Spleen (tissue), 13 donors: ENCODE measurements at regions of chr17 and their contacts with region 1.

Region 1: GRCh38 chr17:51000835-51001638 is 119.6 kb downstream of the SPAG9 start:
- DNase-seq: no peak
- H3K4me3 ChIP-seq: no peak overlapping the region
- H3K27ac ChIP-seq: peak overlapping the region in 1 of 8 donors; percentile 16
- H3K4me1 ChIP-seq: peaks cover 0 to 8% (median 0%) of the 10 kb centered on the region in 6 donors
- H3K27me3 ChIP-seq: no peaks in the 10 kb centered on the region
- CTCF ChIP-seq: peak in 10 of 11 experiments; percentile 35 to 74 (median 56)
- POLR2A ChIP-seq: no peak

Region 2: DNA sequence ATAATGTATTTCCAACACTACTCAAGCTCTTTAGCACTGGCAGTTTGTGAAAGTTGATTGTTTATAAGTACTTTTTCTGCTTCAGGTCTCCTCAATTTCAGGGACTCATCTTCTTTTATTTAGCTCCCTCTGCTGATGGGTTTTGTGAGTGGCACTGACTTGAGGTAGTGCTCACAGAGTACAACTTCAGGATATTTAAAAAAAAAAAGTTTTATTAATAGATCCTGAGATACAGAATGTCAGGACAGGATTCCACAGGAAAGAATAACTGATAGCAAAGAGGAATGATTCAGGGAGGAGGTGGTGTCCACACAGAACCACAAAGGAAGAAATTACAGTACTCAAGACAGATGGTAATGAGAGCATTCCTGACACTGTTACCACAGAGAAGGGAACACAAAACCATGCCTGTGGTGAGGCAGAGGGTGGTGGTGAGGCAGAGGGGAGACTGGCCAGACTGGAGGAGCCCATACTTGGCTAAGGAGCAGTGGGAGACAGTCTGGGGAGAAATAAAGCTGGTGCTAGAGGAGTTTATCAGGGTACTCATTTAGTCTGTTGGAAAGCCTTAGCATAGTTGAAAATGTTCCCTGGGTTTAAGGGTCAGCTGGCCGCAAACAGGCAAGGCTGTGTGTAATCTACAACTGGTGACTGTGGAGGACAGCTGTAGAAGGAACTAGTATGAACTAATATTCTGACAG is 55.9 kb after region 1 on chr17:
- intact Hi-C with region 1: loop called (anchors 5 kb)
- DNase-seq: no peak
- H3K4me3 ChIP-seq: no peak overlapping the region
- H3K27ac ChIP-seq: peak overlapping the region in 5 of 8 donors; percentile 31 to 55 (median 36)
- H3K4me1 ChIP-seq: peaks cover 3 to 55% (median 25%) of the 10 kb centered on the region in 6 donors
- H3K27me3 ChIP-seq: no peaks in the 10 kb centered on the region
- CTCF ChIP-seq: peak in 9 of 11 experiments; percentile 44 to 70 (median 51)
- POLR2A ChIP-seq: no peak

Region 3: GRCh38 chr17:51071556-51071955 is 70.5 kb after region 1 on chr17:
- intact Hi-C with region 1: no loop called
- DNase-seq: no peak
- H3K4me3 ChIP-seq: no peak overlapping the region
- H3K27ac ChIP-seq: peak overlapping the region in 1 of 8 donors; percentile 1
- H3K4me1 ChIP-seq: peaks cover 4 to 40% (median 19%) of the 10 kb centered on the region in 6 donors
- H3K27me3 ChIP-seq: no peaks in the 10 kb centered on the region
- CTCF ChIP-seq: no peak
- POLR2A ChIP-seq: no peak

Region 4: DNA sequence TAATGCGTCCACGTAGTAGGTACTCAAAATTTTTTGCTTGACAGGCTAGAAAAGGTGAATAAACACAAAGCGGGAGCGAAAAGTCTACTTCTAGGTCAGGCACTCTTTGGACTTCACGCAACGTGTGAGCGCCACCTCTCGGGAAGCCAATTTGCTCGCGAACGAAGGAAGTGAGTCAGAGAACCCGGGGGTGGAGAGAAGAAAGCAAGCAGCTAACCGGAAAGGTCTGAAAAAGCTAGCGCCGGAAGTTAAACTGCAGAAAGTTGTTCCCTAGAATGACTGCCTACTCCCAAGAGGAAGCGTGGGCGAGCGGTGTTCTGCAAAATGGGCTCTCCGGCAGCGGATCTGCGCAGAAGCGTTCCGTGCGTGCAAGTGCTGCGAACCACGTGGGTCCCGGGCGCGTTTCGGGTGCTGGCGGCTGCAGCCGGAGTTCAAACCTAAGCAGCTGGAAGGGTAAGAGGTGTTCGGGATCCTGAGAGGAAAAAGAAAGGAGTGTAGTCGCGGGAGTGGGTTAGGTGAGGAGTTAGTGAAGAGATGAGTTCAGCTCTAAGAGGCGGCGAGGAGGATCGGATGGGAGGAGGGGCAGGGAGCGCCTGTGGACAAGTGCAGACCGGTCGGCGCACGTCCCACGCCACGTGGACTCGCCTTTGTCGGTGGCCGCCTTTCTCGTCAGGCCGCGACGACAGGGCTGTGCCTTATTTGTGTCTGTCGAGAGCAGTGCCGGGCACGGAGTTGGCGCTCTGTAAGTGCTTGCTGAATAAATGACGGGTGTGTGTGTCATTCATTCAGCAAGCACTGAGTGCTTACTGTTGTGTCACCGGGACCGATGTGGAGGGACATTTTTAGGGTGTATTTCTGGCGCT is 152.4 kb after region 1 on chr17 and contains the start of gene NME1:
- intact Hi-C with region 1: loop called (anchors 5 kb)
- DNase-seq: peak; percentile 98
- H3K4me3 ChIP-seq: peak within 1 kb of the TSS; percentile 59 to 96 (median 84)
- H3K27ac ChIP-seq: peak within 1 kb of the TSS; percentile 61 to 92 (median 90)
- H3K4me1 ChIP-seq: peaks cover 6 to 32% (median 26%) of the 10 kb centered on the region in 6 donors
- H3K27me3 ChIP-seq: no peaks in the 10 kb centered on the region
- CTCF ChIP-seq: peak; percentile 68 to 95 (median 88)
- POLR2A ChIP-seq: peak in 1 of 3 donors; percentile 77
- total RNA-seq, gene NME1: 21.2 to 66.0 (median 32.7) TPM

Region 5: DNA sequence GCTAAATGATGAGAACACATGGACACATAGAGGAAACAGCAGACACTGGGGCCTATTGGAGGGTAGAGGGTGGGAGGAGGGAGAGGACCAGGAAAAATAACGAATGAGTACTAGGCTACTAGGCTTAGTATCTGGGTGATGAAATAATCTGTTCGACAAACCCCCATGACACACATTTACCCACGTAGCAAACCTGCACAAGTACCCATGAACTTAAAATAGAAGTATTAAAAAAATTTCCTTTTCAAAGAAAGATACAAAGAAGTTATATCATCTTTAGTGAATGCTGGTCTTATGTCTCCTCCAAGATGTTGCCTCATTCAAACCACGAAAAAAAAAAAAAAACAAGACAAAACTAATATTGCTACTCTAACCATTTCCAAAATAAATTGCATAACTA is 227.1 kb after region 1 on chr17:
- intact Hi-C with region 1: no loop called
- DNase-seq: no peak
- H3K4me3 ChIP-seq: no peak overlapping the region
- H3K27ac ChIP-seq: no peak overlapping the region
- H3K4me1 ChIP-seq: peaks cover 10 to 84% (median 32%) of the 10 kb centered on the region in 6 donors
- H3K27me3 ChIP-seq: no peaks in the 10 kb centered on the region
- CTCF ChIP-seq: no peak
- POLR2A ChIP-seq: no peak